ENCODE measurements at regions of chr14 and their contacts with region 1.

Region 1: DNA sequence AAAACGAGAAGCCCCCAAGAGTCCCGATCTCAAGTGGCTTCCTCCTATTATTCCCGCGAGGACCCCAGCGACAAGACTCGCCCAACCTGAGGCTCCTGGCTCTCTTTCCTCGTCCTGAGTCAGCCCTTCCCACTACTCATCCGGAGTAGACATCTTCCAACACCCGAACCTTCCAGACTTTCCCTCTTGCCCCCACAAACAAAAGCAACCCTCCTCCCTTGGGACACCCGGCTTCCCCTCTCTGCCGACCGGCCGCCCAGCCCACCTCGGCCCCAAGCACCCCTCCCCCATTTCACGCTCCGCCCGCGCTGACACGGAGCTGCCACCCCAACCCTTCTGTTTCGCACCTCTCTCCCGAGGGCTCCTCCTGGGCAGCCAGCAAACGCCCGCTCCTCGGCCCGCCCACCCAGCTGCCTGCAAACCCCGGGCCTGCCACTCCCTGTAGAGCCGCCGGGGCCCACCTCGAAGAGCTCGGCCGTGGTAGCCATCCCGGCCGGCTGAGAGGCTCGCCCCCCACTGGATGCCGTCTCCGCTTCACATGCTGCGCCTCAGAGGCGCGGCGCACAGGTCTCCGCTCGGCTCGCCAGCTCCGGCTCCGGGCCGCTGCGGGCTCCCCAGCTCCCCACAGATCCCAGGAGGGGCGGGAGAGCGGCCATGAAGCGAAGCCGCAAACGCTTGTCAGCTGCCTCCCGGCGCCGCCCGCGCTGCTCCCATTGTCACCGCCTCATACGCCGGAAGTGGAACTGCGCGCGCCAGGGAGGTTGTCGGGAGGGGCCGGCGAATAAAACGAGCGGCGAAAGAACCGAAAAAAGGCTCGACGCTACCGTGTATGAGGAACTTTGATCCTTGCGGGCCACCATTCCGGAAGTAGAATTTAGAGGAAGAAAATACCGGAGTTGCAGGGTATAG is at the starts of genes AP5M1 and EXOC5:
- DNase-seq: peak; percentile 58 to 94
- H3K4me3 ChIP-seq: peak within 1 kb of the TSS; percentile 78 to 87
- H3K27ac ChIP-seq: peak within 1 kb of the TSS; percentile 92 to 95
- H3K4me1 ChIP-seq: peaks cover 6 to 34% of the 10 kb centered on the region in 2 donors
- H3K27me3 ChIP-seq: no peaks in the 10 kb centered on the region
- CTCF ChIP-seq: peak in 2 of 3 experiments; percentile 16
- total RNA-seq, gene AP5M1: 6.2 TPM
- total RNA-seq, gene EXOC5: 19.2 TPM

Region 2: GRCh38 chr14:56579345-56580220 is 688.8 kb before region 1 on chr14 and contains the start of gene TMEM260:
- intact Hi-C with region 1: loop called (anchors 10 kb)
- DNase-seq: peak; percentile 21 to 89
- H3K4me3 ChIP-seq: peak within 1 kb of the TSS; percentile 83 to 89
- H3K27ac ChIP-seq: peak within 1 kb of the TSS; percentile 75 to 81
- H3K4me1 ChIP-seq: peaks cover 0 to 15% of the 10 kb centered on the region in 2 donors
- H3K27me3 ChIP-seq: no peaks in the 10 kb centered on the region
- CTCF ChIP-seq: peak; percentile 80 to 94 (median 91)
- total RNA-seq, gene TMEM260: 32.6 TPM

Region 3: DNA sequence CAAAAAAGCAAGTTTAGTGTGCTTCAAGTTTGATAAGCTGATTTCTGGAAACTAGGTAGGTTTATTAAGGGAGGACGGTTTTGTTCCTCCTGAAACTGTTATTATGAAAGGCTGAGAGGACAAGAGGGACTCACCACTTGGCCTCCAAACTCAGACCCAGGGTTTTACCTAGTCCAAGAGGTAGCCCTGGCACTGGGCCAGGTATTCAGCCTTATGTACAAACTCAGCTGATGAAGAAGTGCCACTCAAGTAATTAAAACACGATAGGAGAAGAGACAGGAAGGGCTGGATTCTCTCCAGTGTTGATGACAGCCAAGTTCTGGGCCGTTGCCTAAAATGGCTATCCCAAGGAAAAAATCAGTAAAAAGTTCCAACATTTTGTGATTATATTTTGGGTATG is 185.0 kb before region 1 on chr14:
- intact Hi-C with region 1: no loop called
- DNase-seq: no peak
- H3K4me3 ChIP-seq: no peak overlapping the region
- H3K27ac ChIP-seq: no peak overlapping the region
- H3K4me1 ChIP-seq: no peaks in the 10 kb centered on the region
- H3K27me3 ChIP-seq: no peaks in the 10 kb centered on the region
- CTCF ChIP-seq: no peak

Region 4: GRCh38 chr14:57209561-57209960 is 58.9 kb before region 1 on chr14:
- intact Hi-C with region 1: no loop called
- DNase-seq: no peak
- H3K4me3 ChIP-seq: no peak overlapping the region
- H3K27ac ChIP-seq: no peak overlapping the region
- H3K4me1 ChIP-seq: no peaks in the 10 kb centered on the region
- H3K27me3 ChIP-seq: no peaks in the 10 kb centered on the region
- CTCF ChIP-seq: no peak

Region 5: GRCh38 chr14:57221931-57222330 is 46.5 kb before region 1 on chr14:
- intact Hi-C with region 1: no loop called
- DNase-seq: no peak
- H3K4me3 ChIP-seq: no peak overlapping the region
- H3K27ac ChIP-seq: no peak overlapping the region
- H3K4me1 ChIP-seq: no peaks in the 10 kb centered on the region
- H3K27me3 ChIP-seq: no peaks in the 10 kb centered on the region
- CTCF ChIP-seq: no peak

Region 6: GRCh38 chr14:57390028-57390805 is 121.8 kb after region 1 on chr14 and contains the start of gene NAA30:
- intact Hi-C with region 1: loop called (anchors 5 kb)
- DNase-seq: peak; percentile 83 to 96
- H3K4me3 ChIP-seq: peak within 1 kb of the TSS; percentile 76 to 79
- H3K27ac ChIP-seq: peak within 1 kb of the TSS; percentile 84 to 90
- H3K4me1 ChIP-seq: peaks cover 12% of the 10 kb centered on the region in 2 donors
- H3K27me3 ChIP-seq: no peaks in the 10 kb centered on the region
- CTCF ChIP-seq: no peak
- total RNA-seq, gene NAA30: 6.2 TPM

Region 7: GRCh38 chr14:57403521-57403864 is 135.1 kb after region 1 on chr14:
- intact Hi-C with region 1: no loop called
- DNase-seq: no peak
- H3K4me3 ChIP-seq: no peak overlapping the region
- H3K27ac ChIP-seq: no peak overlapping the region
- H3K4me1 ChIP-seq: no peaks in the 10 kb centered on the region
- H3K27me3 ChIP-seq: no peaks in the 10 kb centered on the region
- CTCF ChIP-seq: no peak

Region 8: GRCh38 chr14:58082491-58083098 is 814.2 kb after region 1 on chr14:
- intact Hi-C with region 1: loop called (anchors 10 kb)
- DNase-seq: peak in 1 of 2 donors; percentile 66
- H3K4me3 ChIP-seq: no peak overlapping the region
- H3K27ac ChIP-seq: peak overlapping the region; percentile 76 to 86
- H3K4me1 ChIP-seq: peaks cover 4 to 20% of the 10 kb centered on the region in 2 donors
- H3K27me3 ChIP-seq: no peaks in the 10 kb centered on the region
- CTCF ChIP-seq: no peak

Region 9: GRCh38 chr14:58427281-58428117 is 1159.1 kb after region 1 on chr14 and contains the starts of genes KIAA0586 and TIMM9:
- intact Hi-C with region 1: loop called (anchors 5 kb)
- DNase-seq: peak; percentile 88 to 98
- H3K4me3 ChIP-seq: peak within 1 kb of the TSS; percentile 66 to 94
- H3K27ac ChIP-seq: peak within 1 kb of the TSS; percentile 85 to 91
- H3K4me1 ChIP-seq: peaks cover 0 to 12% of the 10 kb centered on the region in 2 donors
- H3K27me3 ChIP-seq: no peaks in the 10 kb centered on the region
- CTCF ChIP-seq: no peak
- total RNA-seq, gene KIAA0586: 20.1 TPM
- total RNA-seq, gene TIMM9: 0.96 TPM

Measured in ascending aorta (tissue), 2 donors.